ENCODE measurements at regions of chr1 and their contacts with region 1.

Region 1: DNA sequence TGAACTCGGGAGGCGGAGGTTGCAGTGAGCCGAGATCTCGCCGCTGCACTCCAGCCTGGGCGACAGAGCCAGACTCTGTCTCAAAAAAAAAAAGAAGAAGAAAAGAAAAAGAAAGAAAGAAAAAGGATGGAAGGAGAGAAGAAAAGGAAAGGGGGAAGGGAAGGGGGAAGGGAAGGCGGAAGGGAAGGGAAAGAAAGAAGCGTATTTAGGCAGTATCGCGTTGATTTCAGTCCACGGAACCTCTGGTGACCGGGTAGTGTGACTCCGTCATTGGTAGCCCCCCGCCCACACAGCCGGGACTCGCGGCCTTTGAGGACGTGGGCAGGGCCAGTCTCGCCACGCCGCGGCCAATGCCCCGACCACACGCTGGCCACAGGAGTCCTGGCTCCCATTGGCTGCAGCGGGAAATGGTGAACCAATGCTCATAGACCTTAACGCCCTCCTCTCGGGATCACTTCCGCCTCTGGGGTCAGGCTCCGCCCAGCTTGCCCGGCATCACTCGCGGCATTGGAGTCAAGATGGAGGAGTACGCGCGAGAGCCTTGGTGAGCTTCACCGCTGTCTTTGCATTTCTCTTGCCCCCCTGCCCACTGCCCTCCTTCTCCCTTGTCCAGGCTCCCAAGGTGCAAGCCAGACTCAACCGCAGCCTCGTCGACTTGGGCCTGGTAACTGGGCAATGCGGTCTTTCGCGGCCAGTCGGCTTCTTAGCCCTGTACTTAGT is at the start of gene TIMM17A:
- DNase-seq: peak; percentile 97
- ATAC-seq: peak; percentile 100
- H3K4me3 Mint-ChIP-seq: peak within 1 kb of the TSS; percentile 99
- H3K27ac Mint-ChIP-seq: peak within 1 kb of the TSS; percentile 97
- H3K4me1 Mint-ChIP-seq: peaks cover 16% of the 10 kb centered on the region
- H3K27me3 Mint-ChIP-seq: no peaks in the 10 kb centered on the region
- total RNA-seq, gene TIMM17A: 51.9 to 70.6 TPM

Region 2: GRCh38 chr1:200738740-200739498 is 1216.2 kb before region 1 on chr1 and contains the start of gene CAMSAP2:
- CTCF ChIA-PET with region 1: no interaction called
- POLR2A ChIA-PET with region 1: no interaction called
- intact Hi-C with region 1: loop called in 1 of 2 experiments (anchors 10 kb)
- DNase-seq: peak; percentile 74
- ATAC-seq: peak; percentile 51
- H3K4me3 Mint-ChIP-seq: peak within 1 kb of the TSS; percentile 91
- H3K27ac Mint-ChIP-seq: peak within 1 kb of the TSS; percentile 90
- H3K4me1 Mint-ChIP-seq: peaks cover 44% of the 10 kb centered on the region
- H3K27me3 Mint-ChIP-seq: peaks cover 4% of the 10 kb centered on the region
- total RNA-seq, gene CAMSAP2: 2.3 to 3.0 TPM

Region 3: DNA sequence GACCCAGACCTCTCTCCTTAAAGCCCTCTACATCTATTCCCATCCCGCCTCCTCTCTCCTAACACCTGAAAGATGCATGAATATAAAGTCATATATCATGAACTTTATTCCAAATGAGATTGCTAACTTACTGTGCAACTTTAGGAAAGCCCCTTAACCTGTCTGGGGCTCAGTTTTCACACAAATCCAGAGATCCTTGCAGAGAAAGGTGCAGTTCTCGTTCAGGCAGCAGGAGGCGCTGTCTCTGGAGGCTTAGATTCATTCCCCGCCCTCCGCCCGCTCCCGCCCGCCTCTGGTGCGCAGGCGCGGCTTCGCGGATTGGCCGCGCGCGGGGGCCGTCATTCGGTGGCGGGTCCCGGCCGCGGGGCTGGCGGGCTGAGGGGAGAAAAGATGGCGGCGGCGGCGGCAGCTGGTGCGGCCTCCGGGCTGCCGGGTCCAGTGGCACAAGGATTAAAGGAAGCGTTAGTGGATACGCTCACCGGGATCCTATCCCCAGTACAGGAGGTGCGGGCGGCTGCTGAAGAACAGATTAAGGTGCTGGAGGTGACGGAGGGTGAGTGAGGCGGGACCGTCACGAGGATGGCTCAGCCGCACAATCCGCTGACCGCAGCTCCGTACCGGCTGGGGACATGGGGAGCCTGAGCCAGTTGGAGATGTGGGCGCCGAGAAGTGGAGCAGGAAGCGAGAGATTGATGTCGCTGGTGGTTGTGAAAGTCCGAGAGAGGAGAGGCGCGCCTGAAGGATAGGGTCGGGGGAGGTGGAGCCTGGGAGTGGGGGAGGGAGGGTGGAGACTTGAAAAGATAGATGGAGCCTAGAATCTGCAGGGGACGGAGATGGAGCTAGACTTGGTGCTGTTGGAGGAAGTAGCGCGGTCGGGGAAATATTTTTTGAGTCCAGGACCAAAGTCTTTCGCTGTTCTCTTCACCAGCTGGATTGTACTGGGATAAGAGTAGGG is 126.1 kb before region 1 on chr1 and contains the start of gene IPO9:
- CTCF ChIA-PET with region 1: no interaction called
- POLR2A ChIA-PET with region 1: no interaction called
- intact Hi-C with region 1: loop called in 1 of 2 experiments (anchors 1 kb)
- DNase-seq: peak; percentile 97
- ATAC-seq: peak; percentile 94
- H3K4me3 Mint-ChIP-seq: peak within 1 kb of the TSS; percentile 99
- H3K27ac Mint-ChIP-seq: peak within 1 kb of the TSS; percentile 98
- H3K4me1 Mint-ChIP-seq: peaks cover 37% of the 10 kb centered on the region
- H3K27me3 Mint-ChIP-seq: no peaks in the 10 kb centered on the region
- total RNA-seq, gene IPO9: 65.1 to 66.0 TPM

Region 4: GRCh38 chr1:201912832-201913231 is 42.3 kb before region 1 on chr1:
- CTCF ChIA-PET with region 1: no interaction called
- POLR2A ChIA-PET with region 1: no interaction called
- intact Hi-C with region 1: no loop called
- DNase-seq: no peak
- ATAC-seq: no peak
- H3K4me3 Mint-ChIP-seq: no peak overlapping the region
- H3K27ac Mint-ChIP-seq: no peak overlapping the region
- H3K4me1 Mint-ChIP-seq: no peaks in the 10 kb centered on the region
- H3K27me3 Mint-ChIP-seq: peaks cover 9% of the 10 kb centered on the region

Region 5: DNA sequence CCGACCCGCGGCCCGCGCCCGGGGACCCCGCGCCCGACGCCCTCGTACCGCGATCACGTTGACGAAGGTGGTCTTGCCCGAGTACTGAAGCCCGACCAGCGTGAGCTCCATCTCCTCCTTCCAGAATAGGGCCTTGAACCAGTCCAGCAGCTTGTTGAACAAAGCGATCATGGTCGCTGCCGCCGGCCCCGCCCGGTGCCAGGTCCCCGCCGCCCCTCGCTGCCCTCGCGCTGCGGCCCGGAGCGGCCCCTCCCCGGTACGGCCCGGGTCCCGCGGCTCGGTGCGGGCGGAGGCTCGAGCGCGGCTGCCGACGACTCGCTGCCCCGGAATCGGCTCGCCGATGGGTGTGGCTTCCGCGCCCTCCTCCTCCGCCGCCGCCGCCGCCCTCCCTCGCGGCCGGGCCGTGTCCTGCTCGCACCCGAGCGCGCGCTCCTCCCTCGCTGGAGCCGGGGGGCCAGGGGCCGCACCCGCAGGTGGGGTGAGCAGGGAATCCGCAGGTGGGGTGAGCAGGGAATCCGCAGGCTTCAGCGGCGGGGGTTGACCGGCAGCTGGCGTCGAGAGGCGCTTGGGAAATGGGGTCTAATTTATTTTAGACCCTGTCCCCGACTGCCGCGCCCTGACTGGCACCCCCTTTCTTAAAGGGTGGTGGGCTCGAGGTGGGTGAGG is 189.4 kb after region 1 on chr1 and contains the start of gene ARL8A:
- CTCF ChIA-PET with region 1: no interaction called
- POLR2A ChIA-PET with region 1: interaction called, 3 read pairs
- intact Hi-C with region 1: loop called in 1 of 2 experiments (anchors 1 kb)
- DNase-seq: peak; percentile 83
- ATAC-seq: peak; percentile 68
- H3K4me3 Mint-ChIP-seq: peak within 1 kb of the TSS; percentile 95
- H3K27ac Mint-ChIP-seq: peak within 1 kb of the TSS; percentile 92
- H3K4me1 Mint-ChIP-seq: peaks cover 31% of the 10 kb centered on the region
- H3K27me3 Mint-ChIP-seq: no peaks in the 10 kb centered on the region
- total RNA-seq, gene ARL8A: 32.3 to 51.7 TPM

Region 6: GRCh38 chr1:202167708-202168415 is 212.7 kb after region 1 on chr1:
- CTCF ChIA-PET with region 1: no interaction called
- POLR2A ChIA-PET with region 1: no interaction called
- intact Hi-C with region 1: no loop called
- DNase-seq: no peak
- ATAC-seq: no peak
- H3K4me3 Mint-ChIP-seq: no peak overlapping the region
- H3K27ac Mint-ChIP-seq: no peak overlapping the region
- H3K4me1 Mint-ChIP-seq: peaks cover 36% of the 10 kb centered on the region
- H3K27me3 Mint-ChIP-seq: no peaks in the 10 kb centered on the region

Region 7: DNA sequence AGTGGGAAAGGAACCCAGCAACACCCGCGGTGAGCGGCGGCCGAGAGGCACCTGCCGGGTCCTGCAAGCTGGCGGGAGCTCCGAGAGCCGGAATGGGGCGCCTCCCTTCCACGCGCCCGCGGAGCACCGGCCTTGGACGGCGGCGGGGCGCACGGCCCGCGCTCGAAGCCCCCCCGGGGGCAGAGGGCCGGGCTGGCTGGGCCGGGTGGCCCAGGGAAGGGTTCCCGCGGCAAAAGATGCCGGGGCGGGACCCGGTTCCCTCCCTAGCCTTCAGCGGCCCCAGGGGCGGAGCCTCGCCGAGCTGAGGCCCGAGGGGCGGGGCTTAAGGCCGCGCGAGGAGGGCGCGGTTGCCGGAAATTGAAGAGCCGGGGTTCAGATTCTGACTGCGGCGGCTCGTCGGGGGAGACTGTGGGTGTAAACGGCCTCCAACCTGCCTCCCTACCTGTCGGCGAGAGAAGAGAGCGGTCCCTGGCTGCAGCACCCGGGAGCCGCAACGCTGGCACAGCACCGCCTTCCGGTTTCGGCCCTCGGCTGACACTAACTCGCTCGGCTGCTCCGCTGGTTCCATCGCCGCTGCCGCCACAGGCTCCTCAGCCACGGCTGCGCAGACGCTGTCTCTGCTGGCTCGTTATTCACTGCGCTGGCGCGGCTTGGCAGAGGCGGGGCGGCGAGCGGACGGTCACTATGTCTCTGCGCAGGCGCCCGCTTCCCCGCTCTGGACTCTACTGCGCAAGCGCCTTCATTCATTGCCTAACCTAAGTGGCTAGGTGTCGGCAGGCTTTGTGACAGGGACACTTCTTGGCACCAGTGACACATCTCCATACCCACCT is 933.6 kb after region 1 on chr1 and contains the start of gene RABIF:
- CTCF ChIA-PET with region 1: no interaction called
- POLR2A ChIA-PET with region 1: no interaction called
- intact Hi-C with region 1: loop called in 1 of 2 experiments (anchors 5 kb)
- DNase-seq: peak; percentile 98
- ATAC-seq: peak; percentile 94
- H3K4me3 Mint-ChIP-seq: peak within 1 kb of the TSS; percentile 91
- H3K27ac Mint-ChIP-seq: peak within 1 kb of the TSS; percentile 96
- H3K4me1 Mint-ChIP-seq: peaks cover 15% of the 10 kb centered on the region
- H3K27me3 Mint-ChIP-seq: no peaks in the 10 kb centered on the region
- total RNA-seq, gene RABIF: 6.8 to 7.4 TPM